HEK293T (cell line): ENCODE measurements at regions of chr4 and their contacts with region 1.

Region 1: GRCh38 chr4:75995727-75996126 is 5.0 kb upstream of the SDAD1 start:
- DNase-seq: peak; percentile 35

Region 2: GRCh38 chr4:76036855-76037254 is 41.1 kb after region 1 on chr4:
- CTCF ChIA-PET with region 1: no interaction called
- POLR2A ChIA-PET with region 1: no interaction called
- DNase-seq: no peak

Region 3: GRCh38 chr4:76067652-76068286 is 72.0 kb after region 1 on chr4:
- CTCF ChIA-PET with region 1: interaction called, 11 read pairs
- POLR2A ChIA-PET with region 1: no interaction called
- DNase-seq: peak; percentile 69